AG04450 (cell line): ENCODE measurements at regions of chr19 and their contacts with region 1.

Region 1: DNA sequence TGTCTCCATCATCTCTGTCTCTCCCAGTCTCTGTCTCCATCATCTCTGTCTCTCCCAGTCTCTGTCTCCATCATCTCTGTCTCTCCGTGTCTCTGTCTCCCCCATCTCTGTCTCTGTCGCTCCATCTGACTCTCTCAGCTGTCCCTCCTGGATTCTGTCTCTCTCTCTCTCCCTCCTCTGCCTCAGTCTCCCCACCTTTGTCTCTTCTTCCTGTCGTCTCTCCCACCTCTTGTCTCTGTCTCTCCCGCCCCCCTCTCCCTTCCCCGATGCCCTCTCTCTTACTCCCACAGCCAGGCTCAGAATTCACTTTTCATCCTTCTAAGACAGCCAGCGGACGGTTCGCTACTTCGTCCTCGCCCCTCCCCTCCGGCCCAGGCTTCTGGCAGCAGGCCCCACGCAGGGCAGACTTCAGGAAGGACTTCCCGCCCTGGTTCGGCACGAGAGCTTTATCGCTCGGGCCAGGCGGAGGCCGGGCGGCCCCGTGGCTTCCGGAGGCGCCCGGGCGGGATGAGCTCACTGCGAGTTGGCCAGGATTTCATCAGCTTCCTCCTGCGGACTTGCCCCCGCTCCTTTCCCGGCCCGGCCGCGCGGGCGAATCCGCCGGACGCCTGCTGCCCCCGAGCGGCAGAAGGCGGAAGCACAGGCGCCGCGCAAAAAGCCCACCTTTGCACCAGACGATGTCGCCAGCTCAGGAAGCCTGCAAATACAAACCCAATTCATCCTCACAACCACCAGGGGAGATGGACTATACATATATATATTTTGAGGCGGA is 12.4 kb upstream of the CCDC9 start:
- DNase-seq: peak; percentile 94
- H3K4me3 ChIP-seq: peak overlapping the region; percentile 63
- H3K27ac ChIP-seq: peak overlapping the region; percentile 95
- H3K27me3 ChIP-seq: no peaks in the 10 kb centered on the region
- CTCF ChIP-seq: peak; percentile 92

Region 2: GRCh38 chr19:47130591-47131227 is 113.3 kb before region 1 on chr19 and contains the start of gene SAE1:
- CTCF ChIA-PET with region 1: interaction called, 14 read pairs
- POLR2A ChIA-PET with region 1: interaction called, 4 read pairs
- DNase-seq: peak; percentile 98
- H3K4me3 ChIP-seq: peak within 1 kb of the TSS; percentile 92
- H3K27ac ChIP-seq: peak within 1 kb of the TSS; percentile 81
- H3K27me3 ChIP-seq: no peaks in the 10 kb centered on the region
- CTCF ChIP-seq: peak; percentile 59
- polyA plus RNA-seq, gene SAE1: 142 and 165 TPM in 2 replicates

Region 3: DNA sequence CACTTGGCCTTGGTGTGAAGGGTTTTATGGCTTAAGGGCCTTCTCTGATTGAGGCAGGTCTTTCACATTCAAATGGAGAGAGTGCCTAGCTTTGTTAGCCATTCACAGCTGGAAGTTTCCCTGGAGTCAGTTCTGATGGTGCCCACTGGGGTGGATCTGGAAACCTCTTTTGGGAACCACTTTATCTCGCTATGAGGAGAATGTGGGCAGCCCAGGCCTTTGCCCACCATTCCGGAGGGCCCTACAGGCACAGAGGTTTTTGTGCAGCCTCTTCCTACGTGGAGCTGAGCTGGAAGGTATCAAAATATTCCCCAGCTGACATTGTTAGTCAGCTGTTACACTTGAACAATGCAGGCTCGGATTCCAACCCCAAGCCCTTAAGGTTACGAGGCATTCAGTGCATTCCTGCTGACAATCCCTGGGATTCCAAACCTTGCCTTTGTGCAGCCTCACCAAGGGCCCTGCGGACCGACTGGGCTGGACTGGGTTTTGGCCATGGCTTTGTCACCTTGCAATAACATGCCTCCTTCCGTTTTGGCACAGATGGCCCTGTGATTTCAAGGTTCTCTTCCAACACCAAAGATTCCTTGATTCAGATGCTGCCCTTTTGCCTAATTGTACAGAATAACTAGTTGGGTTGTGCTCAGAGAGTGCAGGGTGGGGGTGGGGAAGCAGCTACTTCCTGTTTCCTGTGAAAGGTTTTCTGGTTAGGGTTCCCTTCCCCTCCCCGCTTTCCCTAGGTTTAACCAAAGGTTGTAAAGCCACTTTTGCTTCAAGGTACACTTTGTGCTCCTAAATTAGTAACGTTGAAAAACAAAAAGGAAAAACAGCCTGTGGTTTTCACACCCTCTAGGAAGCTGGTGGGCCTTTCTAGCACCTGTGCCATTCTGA is 86.3 kb before region 1 on chr19:
- CTCF ChIA-PET with region 1: interaction called, 351 read pairs
- POLR2A ChIA-PET with region 1: interaction called, 3 read pairs
- DNase-seq: peak; percentile 50
- H3K4me3 ChIP-seq: no peak overlapping the region
- H3K27ac ChIP-seq: peak overlapping the region; percentile 69
- H3K27me3 ChIP-seq: no peaks in the 10 kb centered on the region
- CTCF ChIP-seq: 0 out of 2 replicates have a peak, but pooled peaks have one; percentile 5

Region 4: GRCh38 chr19:47203254-47203653 is 40.7 kb before region 1 on chr19:
- CTCF ChIA-PET with region 1: interaction called, 11 read pairs
- POLR2A ChIA-PET with region 1: no interaction called
- DNase-seq: no peak
- H3K4me3 ChIP-seq: no peak overlapping the region
- H3K27ac ChIP-seq: no peak overlapping the region
- H3K27me3 ChIP-seq: no peaks in the 10 kb centered on the region
- CTCF ChIP-seq: no peak

Region 5: DNA sequence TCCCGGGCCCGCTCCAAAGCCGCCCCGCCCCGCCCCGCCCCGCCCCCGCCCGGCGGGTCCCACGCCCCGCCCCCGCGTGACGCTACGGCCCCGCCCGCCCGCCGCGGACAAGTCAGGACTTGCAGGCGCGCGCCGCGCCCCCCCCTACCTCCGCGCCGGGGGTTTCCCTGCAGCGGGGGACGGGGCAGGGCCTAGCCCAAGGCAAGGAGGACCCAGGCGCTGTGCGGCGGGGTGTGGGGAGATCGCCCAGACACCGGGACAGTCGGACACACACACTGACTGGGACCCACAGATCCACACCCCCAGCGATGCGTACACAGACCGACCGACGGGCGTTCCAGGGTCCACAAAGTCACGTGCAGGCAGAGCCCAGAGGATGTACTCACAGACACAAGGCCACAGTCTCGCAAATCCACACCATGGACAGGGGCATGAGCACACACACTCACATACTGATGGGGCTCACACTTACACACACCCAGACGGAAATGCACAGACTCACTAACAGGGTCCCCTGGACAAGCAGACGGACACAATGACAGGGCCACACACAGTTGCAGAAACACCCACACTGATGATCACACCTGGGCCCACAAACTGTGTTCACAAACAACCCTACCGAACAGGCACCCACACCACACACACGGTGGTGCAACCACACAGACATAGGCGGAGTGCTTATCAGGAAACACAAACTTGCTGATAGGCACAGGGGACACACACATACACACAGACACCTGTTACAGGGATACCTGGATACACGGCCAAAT is 12.6 kb before region 1 on chr19:
- CTCF ChIA-PET with region 1: interaction called, 21 read pairs
- POLR2A ChIA-PET with region 1: interaction called, 56 read pairs
- DNase-seq: peak; percentile 72
- H3K4me3 ChIP-seq: peak overlapping the region; percentile 98
- H3K27ac ChIP-seq: peak overlapping the region; percentile 84
- H3K27me3 ChIP-seq: no peaks in the 10 kb centered on the region
- CTCF ChIP-seq: no peak